ENCODE measurements at regions of chr6 and their contacts with region 1.

Region 1: GRCh38 chr6:73566954-73567591 is 46.2 kb upstream of the EEF1A1 start:
- DNase-seq: peak; percentile 86

Region 2: DNA sequence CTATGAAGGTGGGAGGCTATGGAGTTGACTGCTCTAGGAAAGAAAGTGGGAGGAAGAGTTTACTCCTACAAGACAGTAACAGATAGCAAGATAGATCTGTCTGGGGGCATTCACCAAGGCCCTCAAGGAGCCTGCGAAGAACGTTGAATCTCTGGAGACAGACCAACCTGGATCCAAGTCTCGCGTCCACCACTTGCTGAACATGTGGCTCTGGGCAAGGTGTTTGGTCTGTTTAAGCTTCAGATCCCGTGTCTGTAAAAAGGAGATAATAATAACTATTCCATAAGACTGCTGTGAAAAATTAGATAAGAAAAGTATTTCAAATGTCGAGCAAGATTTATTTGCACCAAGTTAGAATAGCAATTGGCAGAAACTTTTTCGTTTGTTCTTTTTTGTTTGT is 38.2 kb before region 1 on chr6:
- intact Hi-C with region 1: loop called in 1 of 2 experiments (anchors 5 kb)
- DNase-seq: no peak

Region 3: DNA sequence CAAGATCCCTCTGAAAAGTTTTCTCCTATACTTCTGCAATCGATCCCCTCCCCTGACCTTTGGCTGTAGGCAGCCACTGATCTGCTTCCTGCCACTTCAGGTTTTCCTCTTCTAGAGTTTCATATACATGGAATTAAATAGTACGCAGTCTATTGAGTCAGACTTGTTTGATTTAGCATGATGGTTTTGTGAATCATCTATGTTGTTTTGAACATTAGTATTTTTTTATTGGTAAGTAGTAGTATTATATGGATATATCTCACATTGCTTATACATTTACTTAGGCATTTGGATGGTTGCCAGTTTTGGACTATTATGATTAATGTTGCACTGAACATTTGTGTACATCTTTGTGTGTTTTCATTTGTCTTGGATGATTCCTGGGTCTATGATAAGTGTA is 646.9 kb after region 1 on chr6:
- intact Hi-C with region 1: no loop called
- DNase-seq: no peak